SK-MEL-5 (cell line): ENCODE measurements at regions of chr18 and their contacts with region 1.

Region 1: GRCh38 chr18:35240664-35241447 is at the start of gene ZNF397:
- DNase-seq: peak; percentile 95
- total RNA-seq, gene ZNF397: 16.8 and 18.3 TPM in 2 replicates

Region 2: DNA sequence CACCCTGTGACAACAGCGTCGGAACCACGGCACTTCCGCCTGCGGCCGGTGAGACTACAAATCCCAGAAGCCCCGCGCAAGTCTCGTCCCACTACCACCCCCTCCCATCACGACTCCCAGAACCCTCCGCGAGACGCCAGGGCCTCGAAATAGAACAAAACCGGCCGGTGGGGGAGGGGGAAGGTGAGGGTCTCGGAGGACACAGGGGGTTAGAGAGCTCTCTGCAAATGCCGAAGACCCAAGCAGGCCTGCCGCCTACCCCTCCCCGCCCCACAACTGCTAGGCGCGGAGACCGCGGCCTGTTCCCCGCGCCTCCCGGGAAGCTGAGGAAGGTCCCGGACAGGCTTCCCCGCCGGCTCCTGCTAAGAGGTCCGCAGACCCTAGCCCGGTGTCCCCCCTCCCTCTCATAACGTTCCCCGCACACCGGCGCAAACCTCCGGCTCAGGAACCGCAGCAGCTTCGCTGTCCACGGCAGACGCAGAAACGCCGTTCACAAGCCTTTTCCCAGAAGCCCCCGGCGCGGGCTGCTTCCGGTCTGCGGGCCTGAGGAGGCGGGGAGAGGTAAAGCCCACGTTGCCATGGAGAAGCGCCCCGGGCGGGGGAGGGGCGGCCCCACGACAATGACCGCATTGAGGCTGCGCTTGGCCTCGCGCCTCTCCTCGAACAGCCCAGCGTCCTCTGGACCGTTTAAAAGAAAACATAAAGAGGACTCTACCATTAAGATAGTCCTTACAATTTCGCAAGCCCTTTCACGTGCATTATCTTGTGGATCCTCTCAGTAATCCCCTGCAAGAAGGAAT is 103.3 kb after region 1 on chr18 and contains the start of gene ZNF24:
- in situ Hi-C with region 1: loop called (anchors 25 kb)
- DNase-seq: peak; percentile 97
- total RNA-seq, gene ZNF24: 62.9 and 64.7 TPM in 2 replicates

Region 3: DNA sequence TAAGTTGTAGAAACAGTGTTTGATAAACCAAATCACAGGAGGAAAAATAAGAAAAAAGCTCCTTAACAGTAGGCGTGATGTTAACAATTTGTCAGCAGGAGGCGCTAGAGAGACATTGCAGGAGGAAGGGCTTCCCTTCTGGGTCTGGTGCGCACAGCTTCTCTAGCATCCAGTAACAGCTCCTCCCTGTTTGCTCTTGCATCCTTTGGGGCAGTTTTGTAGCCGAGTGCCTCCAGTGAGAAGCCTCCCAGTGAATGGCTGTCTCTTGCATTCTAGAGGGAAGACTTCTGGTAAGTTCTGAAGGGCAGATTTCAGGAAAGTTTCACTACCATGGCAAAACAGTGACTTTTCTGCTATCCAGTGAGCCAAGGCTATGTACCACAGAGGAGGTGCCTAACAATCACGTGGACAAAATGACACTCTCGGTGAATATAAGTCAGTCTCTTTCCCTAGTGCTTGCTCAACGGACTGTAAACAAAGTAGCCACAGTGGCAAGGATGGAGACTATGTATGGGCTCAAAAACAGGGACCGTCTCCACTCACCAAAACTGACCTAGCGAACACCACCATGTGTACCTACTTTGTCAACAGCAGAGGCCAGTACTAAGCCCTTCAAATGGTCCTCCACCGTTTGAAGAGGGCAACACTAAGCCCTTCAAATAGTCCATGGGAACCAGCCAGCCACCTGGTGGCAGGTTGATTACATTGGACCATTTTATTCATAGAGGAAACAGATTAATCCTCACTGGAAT is 145.9 kb after region 1 on chr18:
- in situ Hi-C with region 1: no loop called
- DNase-seq: peak; percentile 82

Region 4: GRCh38 chr18:35653392-35654135 is 412.7 kb after region 1 on chr18:
- in situ Hi-C with region 1: no loop called
- DNase-seq: no peak